K562 (cell line): ENCODE measurements at regions of chr2 and their contacts with region 1.

Region 1: DNA sequence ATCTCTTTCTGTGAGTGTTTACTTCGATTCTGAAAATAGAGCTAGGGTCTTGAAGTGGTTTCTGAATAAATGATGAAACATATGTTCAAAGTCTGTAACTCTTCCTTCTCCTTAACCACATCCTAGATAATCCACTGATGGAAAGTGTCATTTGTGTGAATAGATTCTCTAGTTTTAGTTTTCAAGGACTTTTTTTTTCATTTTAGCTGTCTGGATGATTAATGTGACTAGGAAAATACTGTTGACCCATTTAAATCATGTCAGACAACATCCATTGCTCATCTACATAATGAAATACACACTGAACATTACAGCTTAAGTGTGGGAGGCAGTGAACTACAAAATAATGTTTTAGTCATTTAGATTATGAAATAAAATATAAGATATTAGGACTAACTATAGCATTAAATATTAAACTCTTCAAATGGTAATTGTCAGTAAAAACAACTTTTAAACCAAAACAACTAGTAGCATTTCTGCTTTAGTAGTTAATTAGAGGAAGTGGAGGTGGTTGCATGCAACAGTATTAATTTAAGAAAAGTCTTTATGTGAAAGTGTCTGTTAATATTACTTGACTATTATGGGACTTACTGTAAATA is 39.1 kb upstream of the DLX1 start:
- DNase-seq: no peak
- ATAC-seq: peak; percentile 52
- H3K4me3 ChIP-seq: no peak overlapping the region
- H3K27ac ChIP-seq: peak overlapping the region; percentile 14; the same call in 2 of the 3 replicates
- H3K4me1 ChIP-seq: peaks cover 3 to 29% of the 10 kb centered on the region in 2 experiments; a peak in 4 of 5 replicates
- H3K27me3 ChIP-seq: no peaks in the 10 kb centered on the region
- CTCF ChIP-seq: no peak
- EP300 ChIP-seq: peak; percentile 91
- POLR2A ChIP-seq: no peak
- RAD21 ChIP-seq: peak; percentile 5 to 31; a peak in 3 of 4 replicates

Region 2: DNA sequence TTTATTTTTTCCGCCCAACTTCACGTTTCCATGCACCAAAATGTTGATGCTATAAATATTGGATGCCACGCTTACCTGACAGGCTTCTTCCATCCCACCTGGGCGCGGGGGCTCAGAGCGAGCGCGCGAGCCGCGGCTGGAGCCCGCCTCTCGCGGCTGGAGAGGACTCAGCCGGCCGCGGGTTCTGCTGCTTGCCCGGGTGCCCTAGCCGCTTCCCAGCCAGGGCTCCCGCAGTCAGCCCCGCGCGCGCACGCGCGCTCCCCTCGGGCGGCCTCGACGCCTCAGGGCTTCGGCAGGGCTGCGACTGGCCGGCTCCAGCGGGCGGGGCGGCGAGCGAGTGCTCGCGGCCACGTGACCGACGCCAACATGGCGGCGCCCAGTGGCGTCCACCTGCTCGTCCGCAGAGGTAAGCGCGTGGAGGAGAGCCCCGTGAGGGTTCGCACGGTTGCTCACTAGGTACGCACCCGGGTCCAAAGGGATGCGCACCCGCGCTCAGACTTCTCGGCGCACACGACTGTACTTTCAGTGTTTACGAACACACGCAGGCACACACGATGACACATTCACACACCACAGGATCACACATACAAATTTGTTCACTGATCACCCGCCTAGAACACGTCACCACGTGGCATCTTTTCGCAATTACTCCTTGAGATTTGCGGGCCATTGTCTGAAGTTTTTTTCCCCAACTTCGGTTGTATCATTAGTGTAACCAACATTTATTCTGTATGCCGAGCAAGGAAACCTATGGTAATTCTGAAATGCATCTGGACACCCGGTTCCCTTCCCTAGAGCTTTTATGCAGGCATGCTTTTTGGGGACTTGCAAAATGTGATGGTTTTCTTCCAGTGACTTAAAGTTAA is 46.3 kb before region 1 on chr2 and contains the start of gene METAP1D:
- CTCF ChIA-PET with region 1: no interaction called
- POLR2A ChIA-PET with region 1: no interaction called
- in situ Hi-C with region 1: no loop called
- intact Hi-C with region 1: loop called (anchors 1 kb)
- DNase-seq: peak; percentile 98 to 99 (median 98)
- ATAC-seq: peak; percentile 98
- H3K4me3 ChIP-seq: peak within 1 kb of the TSS; percentile 56
- H3K27ac ChIP-seq: peak within 1 kb of the TSS; percentile 93
- H3K4me1 ChIP-seq: peaks cover 6 to 13% of the 10 kb centered on the region in 2 experiments; a peak in 4 of 5 replicates
- H3K27me3 ChIP-seq: no peaks in the 10 kb centered on the region
- CTCF ChIP-seq: peak in 1 of 3 experiments; percentile 2; a peak in 2 of 6 replicates
- EP300 ChIP-seq: no peak
- POLR2A ChIP-seq: peak; percentile 94
- RAD21 ChIP-seq: peak; percentile 38 to 50; a peak in 3 of 4 replicates
- polyA plus RNA-seq, gene METAP1D: 8.0 to 10.4 TPM

Region 3: GRCh38 chr2:172058660-172059059 is 12.5 kb after region 1 on chr2:
- CTCF ChIA-PET with region 1: no interaction called
- POLR2A ChIA-PET with region 1: interaction called, 17 read pairs
- in situ Hi-C with region 1: no loop called
- intact Hi-C with region 1: no loop called
- DNase-seq: no peak
- ATAC-seq: no peak
- H3K4me3 ChIP-seq: no peak overlapping the region
- H3K27ac ChIP-seq: no peak overlapping the region
- H3K4me1 ChIP-seq: peaks cover 4 to 18% of the 10 kb centered on the region in 2 experiments; a peak in 4 of 5 replicates
- H3K27me3 ChIP-seq: no peaks in the 10 kb centered on the region
- CTCF ChIP-seq: no peak
- EP300 ChIP-seq: no peak
- POLR2A ChIP-seq: no peak
- RAD21 ChIP-seq: no peak

Region 4: DNA sequence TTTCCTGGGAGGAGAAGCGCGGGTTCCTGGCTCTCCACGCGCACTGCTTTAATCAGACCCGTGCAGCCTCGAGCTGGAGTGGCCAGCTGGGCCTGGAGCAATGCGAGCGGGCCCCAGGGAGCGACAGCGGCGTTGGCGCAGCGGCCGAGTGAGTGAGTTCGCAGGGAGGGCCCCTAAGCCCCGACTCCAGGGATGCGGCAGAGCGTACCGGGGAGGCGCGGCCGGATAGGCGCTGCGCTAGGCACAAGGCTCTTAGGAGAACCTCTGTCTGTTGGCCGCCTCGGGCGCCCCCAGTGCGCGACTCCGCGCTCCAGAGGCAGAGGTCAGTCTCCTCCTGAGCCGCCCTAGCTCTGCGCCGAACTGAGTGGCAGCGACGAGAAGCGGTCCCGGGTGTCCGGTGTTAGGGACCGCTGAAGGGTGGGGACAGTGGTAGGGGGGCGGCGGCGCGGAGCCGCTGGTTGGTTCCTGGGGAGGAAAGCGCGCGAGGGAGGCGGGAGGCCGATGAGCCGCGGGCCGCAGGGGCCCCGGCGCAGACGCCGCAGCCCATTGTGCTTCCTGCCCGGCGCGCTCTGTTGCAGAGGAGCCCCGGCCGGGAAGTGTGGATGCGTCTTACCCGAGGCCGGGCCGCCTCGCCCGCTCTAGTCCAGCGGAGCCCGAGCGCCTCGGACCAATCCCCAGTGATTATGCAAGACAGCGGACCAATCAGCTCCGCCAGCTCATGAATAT is 38.7 kb after region 1 on chr2:
- CTCF ChIA-PET with region 1: no interaction called
- POLR2A ChIA-PET with region 1: interaction called, 7 read pairs
- in situ Hi-C with region 1: no loop called
- intact Hi-C with region 1: loop called (anchors 2 kb)
- DNase-seq: peak; percentile 94 to 98 (median 96)
- ATAC-seq: peak; percentile 96
- H3K4me3 ChIP-seq: peak overlapping the region; percentile 65
- H3K27ac ChIP-seq: peak overlapping the region; percentile 81
- H3K4me1 ChIP-seq: peaks cover 7 to 43% of the 10 kb centered on the region in 2 experiments; a peak in 4 of 5 replicates
- H3K27me3 ChIP-seq: no peaks in the 10 kb centered on the region
- CTCF ChIP-seq: no peak
- EP300 ChIP-seq: peak; percentile 20; the same call in 1 of the 2 replicates
- POLR2A ChIP-seq: peak; percentile 91
- RAD21 ChIP-seq: peak; percentile 5 to 14; a peak in 2 of 4 replicates

Region 5: DNA sequence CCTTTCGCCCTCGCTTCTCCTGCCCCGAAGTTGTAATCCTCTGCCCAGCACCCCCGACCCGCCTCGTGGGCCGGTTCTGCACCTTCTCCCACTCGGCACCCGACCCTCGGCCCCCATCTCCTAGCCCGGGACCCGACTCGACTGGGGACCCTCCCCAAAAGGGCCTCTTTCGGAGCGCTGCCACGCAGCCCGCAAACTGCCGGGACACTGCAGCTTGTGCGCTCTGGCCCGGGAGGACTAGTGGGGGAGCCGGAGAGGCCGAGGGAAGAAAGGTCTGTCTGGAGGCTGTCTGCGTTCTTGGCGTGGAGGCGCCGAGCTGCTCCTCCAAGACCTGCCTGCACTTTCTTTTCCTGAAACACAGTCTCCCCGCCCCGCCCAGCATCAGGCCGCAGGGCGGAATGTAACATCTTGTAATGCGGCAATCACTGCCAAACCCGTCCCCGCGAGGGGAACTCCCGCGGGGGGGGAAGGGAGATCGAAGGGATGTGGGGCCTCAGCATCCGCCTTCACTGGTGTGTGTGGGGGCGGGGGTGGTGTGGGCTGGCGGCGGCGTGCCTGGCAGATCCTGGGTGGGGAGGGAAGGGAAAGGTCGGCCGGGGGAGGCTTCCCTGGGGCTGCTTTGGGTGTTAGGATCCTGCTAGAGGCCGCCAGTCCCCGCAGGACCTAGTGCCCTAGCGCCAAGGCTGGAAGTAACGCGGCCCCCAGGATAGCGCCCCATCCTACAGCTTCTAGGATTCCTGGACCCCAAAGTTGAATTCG is 49.1 kb after region 1 on chr2:
- CTCF ChIA-PET with region 1: no interaction called
- POLR2A ChIA-PET with region 1: no interaction called
- in situ Hi-C with region 1: no loop called
- intact Hi-C with region 1: no loop called
- DNase-seq: no peak
- ATAC-seq: no peak
- H3K4me3 ChIP-seq: no peak overlapping the region
- H3K27ac ChIP-seq: no peak overlapping the region
- H3K4me1 ChIP-seq: peaks cover 22 to 41% of the 10 kb centered on the region in 2 experiments
- H3K27me3 ChIP-seq: no peaks in the 10 kb centered on the region; a peak in 1 of 5 replicates
- CTCF ChIP-seq: no peak
- EP300 ChIP-seq: no peak
- POLR2A ChIP-seq: no peak
- RAD21 ChIP-seq: no peak

Region 6: GRCh38 chr2:172307800-172308199 is 261.6 kb after region 1 on chr2:
- CTCF ChIA-PET with region 1: no interaction called
- POLR2A ChIA-PET with region 1: no interaction called
- in situ Hi-C with region 1: no loop called
- intact Hi-C with region 1: no loop called
- DNase-seq: no peak
- ATAC-seq: no peak
- H3K4me3 ChIP-seq: no peak overlapping the region
- H3K27ac ChIP-seq: no peak overlapping the region
- H3K4me1 ChIP-seq: no peaks in the 10 kb centered on the region
- H3K27me3 ChIP-seq: peaks cover 0 to 2% of the 10 kb centered on the region in 2 experiments; a peak in 2 of 5 replicates
- CTCF ChIP-seq: no peak
- EP300 ChIP-seq: no peak
- POLR2A ChIP-seq: no peak
- RAD21 ChIP-seq: no peak